Mammary epithelial cell (primary cell): ENCODE measurements at regions of chr9 and their contacts with region 1.

Region 1: GRCh38 chr9:109422641-109423040 is 75.5 kb downstream of the PTPN3 start:
- DNase-seq: no peak
- H3K4me3 ChIP-seq: no peak overlapping the region
- H3K27ac ChIP-seq: no peak overlapping the region
- H3K4me1 ChIP-seq: no peaks in the 10 kb centered on the region
- H3K27me3 ChIP-seq: no peaks in the 10 kb centered on the region
- CTCF ChIP-seq: no peak

Region 2: DNA sequence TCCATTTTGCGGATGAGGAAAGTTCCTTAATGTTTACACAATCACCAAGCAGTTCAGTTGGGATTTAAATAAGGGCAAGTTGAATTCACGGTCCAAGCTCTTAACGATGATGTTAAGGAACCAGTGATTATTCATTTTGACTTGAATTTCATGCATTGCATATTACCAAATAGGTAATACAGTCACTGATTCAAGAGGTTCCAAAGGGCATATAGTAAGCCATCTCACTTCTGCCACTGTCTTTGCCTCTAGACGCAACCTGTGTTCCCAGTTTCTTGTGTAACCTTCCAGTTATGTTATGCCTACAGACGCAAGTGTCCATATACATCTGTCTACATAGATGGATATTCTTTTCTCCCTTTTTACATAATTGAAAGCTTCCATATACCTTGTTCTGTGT is 61.9 kb before region 1 on chr9:
- CTCF ChIA-PET with region 1: no interaction called
- dilution Hi-C with region 1: loop called (anchors 5 kb)
- in situ Hi-C with region 1: no loop called
- intact Hi-C with region 1: no loop called
- DNase-seq: no peak
- H3K4me3 ChIP-seq: no peak overlapping the region
- H3K27ac ChIP-seq: no peak overlapping the region
- H3K4me1 ChIP-seq: no peaks in the 10 kb centered on the region
- H3K27me3 ChIP-seq: no peaks in the 10 kb centered on the region
- CTCF ChIP-seq: no peak

Region 3: DNA sequence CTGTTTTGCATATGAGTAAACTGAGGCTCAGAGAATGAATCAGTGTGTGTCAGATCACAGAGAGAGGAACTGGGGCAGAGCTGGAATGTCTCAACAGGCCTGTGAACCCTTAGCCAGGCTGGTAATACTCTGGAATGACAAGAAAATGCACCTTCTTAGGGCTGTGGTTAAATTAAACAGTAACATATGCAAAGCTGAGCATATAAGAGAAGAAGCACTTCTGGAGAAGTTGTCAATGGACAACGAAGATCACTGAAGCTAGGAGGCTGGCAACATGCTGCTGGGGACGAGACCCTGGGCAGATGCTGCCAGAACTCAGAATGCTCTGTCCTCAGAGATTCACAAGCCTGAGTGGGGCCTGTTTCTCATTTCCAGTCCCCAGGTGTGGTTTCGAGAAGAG is 37.1 kb before region 1 on chr9:
- CTCF ChIA-PET with region 1: no interaction called
- dilution Hi-C with region 1: no loop called
- in situ Hi-C with region 1: no loop called
- intact Hi-C with region 1: no loop called
- DNase-seq: no peak
- H3K4me3 ChIP-seq: no peak overlapping the region
- H3K27ac ChIP-seq: no peak overlapping the region
- H3K4me1 ChIP-seq: no peaks in the 10 kb centered on the region
- H3K27me3 ChIP-seq: no peaks in the 10 kb centered on the region
- CTCF ChIP-seq: no peak

Region 4: GRCh38 chr9:109482391-109482916 is 59.8 kb after region 1 on chr9:
- CTCF ChIA-PET with region 1: no interaction called
- dilution Hi-C with region 1: loop called (anchors 5 kb)
- in situ Hi-C with region 1: no loop called
- intact Hi-C with region 1: no loop called
- DNase-seq: no peak
- H3K4me3 ChIP-seq: no peak overlapping the region
- H3K27ac ChIP-seq: no peak overlapping the region
- H3K4me1 ChIP-seq: peaks cover 6% of the 10 kb centered on the region
- H3K27me3 ChIP-seq: no peaks in the 10 kb centered on the region
- CTCF ChIP-seq: no peak